ENCODE measurements at regions of chr2 and their contacts with region 1.

Region 1: GRCh38 chr2:143629340-143629739 is 500.1 kb downstream of the ARHGAP15 start:
- DNase-seq: peak; percentile 63
- ATAC-seq: peak; percentile 64
- H3K4me3 ChIP-seq: no peak overlapping the region
- H3K27ac ChIP-seq: no peak overlapping the region
- H3K4me1 ChIP-seq: no peaks in the 10 kb centered on the region
- H3K27me3 ChIP-seq: no peaks in the 10 kb centered on the region
- CTCF ChIP-seq: no peak
- POLR2A ChIP-seq: no peak
- RAD21 ChIP-seq: no peak

Region 2: DNA sequence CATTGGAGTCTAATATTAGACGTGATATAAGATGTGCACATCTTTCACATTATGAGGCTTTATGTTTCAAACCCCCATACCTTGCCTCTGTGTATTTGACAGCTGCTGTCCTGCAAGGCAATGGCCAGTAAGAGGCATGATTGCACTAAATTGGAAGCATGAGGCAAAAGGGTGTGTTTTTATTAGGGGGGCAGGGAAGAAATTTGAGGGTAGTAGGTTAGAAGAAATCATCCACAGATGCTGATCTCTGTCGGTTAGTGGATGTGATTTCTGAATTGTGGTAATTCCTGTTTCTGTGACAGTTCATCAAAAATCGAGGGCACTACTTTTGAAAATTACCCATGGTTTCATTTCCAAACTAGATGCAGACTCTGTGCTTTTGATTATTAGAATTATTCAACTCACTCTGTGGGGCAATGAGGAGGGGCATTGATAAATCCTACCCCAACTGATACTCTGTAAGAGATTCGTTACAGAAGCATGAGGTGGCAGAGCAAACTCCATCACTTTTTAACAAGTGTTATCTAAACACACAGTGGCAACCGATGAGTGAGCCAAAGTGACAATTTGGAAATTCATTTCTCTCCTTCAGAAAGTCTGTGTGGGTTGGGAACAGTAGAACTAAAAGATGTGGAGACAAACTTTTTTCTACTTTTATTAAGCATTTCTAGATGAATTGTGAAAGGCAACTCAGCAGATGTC is 47.1 kb before region 1 on chr2:
- CTCF ChIA-PET with region 1: no interaction called
- POLR2A ChIA-PET with region 1: no interaction called
- dilution Hi-C with region 1: no loop called
- in situ Hi-C with region 1: no loop called
- intact Hi-C with region 1: loop called (anchors 1 kb)
- DNase-seq: peak; percentile 52
- ATAC-seq: peak; percentile 85
- H3K4me3 ChIP-seq: no peak overlapping the region
- H3K27ac ChIP-seq: no peak overlapping the region
- H3K4me1 ChIP-seq: no peaks in the 10 kb centered on the region; the same call in 1 of the 2 replicates
- H3K27me3 ChIP-seq: no peaks in the 10 kb centered on the region
- CTCF ChIP-seq: peak; percentile 55
- POLR2A ChIP-seq: no peak
- RAD21 ChIP-seq: peak; percentile 63

Region 3: DNA sequence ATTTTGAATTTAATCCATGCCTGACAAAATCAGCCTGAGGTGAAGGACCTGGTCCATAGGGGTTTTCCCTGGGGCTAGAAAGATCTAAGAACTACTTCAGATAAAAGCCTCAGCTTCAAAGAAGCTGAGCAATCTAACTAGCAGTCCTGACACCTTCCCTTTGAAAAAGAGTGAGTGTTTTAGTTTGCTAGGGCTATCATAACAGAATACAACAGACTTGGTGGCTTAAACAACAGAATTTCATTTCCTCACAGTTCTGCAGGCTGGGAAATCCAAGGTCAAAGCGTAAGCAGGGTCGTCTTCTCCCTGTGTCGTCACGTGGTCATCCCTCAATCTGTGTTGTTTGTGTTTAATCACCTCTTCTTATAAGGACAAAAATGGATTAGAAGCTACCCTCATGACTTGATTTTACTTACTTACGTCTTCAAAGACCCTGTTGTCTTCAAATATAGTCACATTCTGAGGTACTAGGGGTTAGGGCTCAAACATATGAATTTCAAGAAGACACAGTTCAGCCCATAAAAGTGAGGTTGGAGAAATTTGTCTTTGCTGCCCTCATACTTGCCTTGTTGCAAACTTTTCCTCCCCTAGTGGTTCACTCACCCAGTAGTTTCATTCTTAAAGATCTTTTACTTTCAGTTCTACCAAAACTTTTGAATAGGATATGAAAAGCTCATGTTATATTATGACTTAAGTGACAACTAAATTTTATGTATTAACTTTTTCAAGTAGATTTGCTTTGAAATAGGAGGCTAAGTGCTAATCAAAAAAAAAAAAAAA is 173.7 kb after region 1 on chr2:
- CTCF ChIA-PET with region 1: no interaction called
- POLR2A ChIA-PET with region 1: no interaction called
- dilution Hi-C with region 1: no loop called
- in situ Hi-C with region 1: no loop called
- intact Hi-C with region 1: no loop called
- DNase-seq: peak; percentile 28
- ATAC-seq: peak; percentile 13; the same call in 1 of the 2 replicates
- H3K4me3 ChIP-seq: no peak overlapping the region
- H3K27ac ChIP-seq: peak overlapping the region; percentile 85
- H3K4me1 ChIP-seq: peaks cover 18% of the 10 kb centered on the region
- H3K27me3 ChIP-seq: no peaks in the 10 kb centered on the region
- CTCF ChIP-seq: no peak
- POLR2A ChIP-seq: no peak
- RAD21 ChIP-seq: no peak

Measured in IMR-90 (cell line).